PC-9 (cell line): ENCODE measurements at regions of chr1 and their contacts with region 1.

Region 1: GRCh38 chr1:209363112-209363511 is 220.4 kb upstream of the CAMK1G start:
- DNase-seq: peak; percentile 55 to 76
- H3K4me3 ChIP-seq: no peak overlapping the region
- H3K27ac ChIP-seq: peak overlapping the region; percentile 26; the same call in 1 of the 2 replicates
- H3K4me1 ChIP-seq: peaks cover 32% of the 10 kb centered on the region
- H3K27me3 ChIP-seq: no peaks in the 10 kb centered on the region
- CTCF ChIP-seq: no peak

Region 2: GRCh38 chr1:209307846-209308245 is 55.3 kb before region 1 on chr1:
- CTCF ChIA-PET with region 1: no interaction called
- POLR2A ChIA-PET with region 1: no interaction called
- intact Hi-C with region 1: no loop called
- DNase-seq: no peak
- H3K4me3 ChIP-seq: no peak overlapping the region
- H3K27ac ChIP-seq: no peak overlapping the region
- H3K4me1 ChIP-seq: peaks cover 8% of the 10 kb centered on the region; the same call in 1 of the 2 replicates
- H3K27me3 ChIP-seq: no peaks in the 10 kb centered on the region
- CTCF ChIP-seq: no peak

Region 3: GRCh38 chr1:209383907-209384709 is 21.0 kb after region 1 on chr1:
- CTCF ChIA-PET with region 1: no interaction called
- POLR2A ChIA-PET with region 1: interaction called, 13 read pairs
- intact Hi-C with region 1: loop called (anchors 1 kb)
- DNase-seq: peak; percentile 55 to 90
- H3K4me3 ChIP-seq: no peak overlapping the region
- H3K27ac ChIP-seq: peak overlapping the region; percentile 77
- H3K4me1 ChIP-seq: peaks cover 69% of the 10 kb centered on the region
- H3K27me3 ChIP-seq: no peaks in the 10 kb centered on the region
- CTCF ChIP-seq: no peak

Region 4: GRCh38 chr1:209398313-209398991 is 35.3 kb after region 1 on chr1:
- CTCF ChIA-PET with region 1: interaction called, 6 read pairs
- POLR2A ChIA-PET with region 1: interaction called, 17 read pairs
- intact Hi-C with region 1: no loop called
- DNase-seq: peak; percentile 88 to 98
- H3K4me3 ChIP-seq: no peak overlapping the region; the same call in 1 of the 2 replicates
- H3K27ac ChIP-seq: peak overlapping the region; percentile 99
- H3K4me1 ChIP-seq: peaks cover 64% of the 10 kb centered on the region
- H3K27me3 ChIP-seq: no peaks in the 10 kb centered on the region
- CTCF ChIP-seq: no peak